Mammary epithelial cell (primary cell): ENCODE measurements at regions of chr9 and their contacts with region 1.

Region 1: DNA sequence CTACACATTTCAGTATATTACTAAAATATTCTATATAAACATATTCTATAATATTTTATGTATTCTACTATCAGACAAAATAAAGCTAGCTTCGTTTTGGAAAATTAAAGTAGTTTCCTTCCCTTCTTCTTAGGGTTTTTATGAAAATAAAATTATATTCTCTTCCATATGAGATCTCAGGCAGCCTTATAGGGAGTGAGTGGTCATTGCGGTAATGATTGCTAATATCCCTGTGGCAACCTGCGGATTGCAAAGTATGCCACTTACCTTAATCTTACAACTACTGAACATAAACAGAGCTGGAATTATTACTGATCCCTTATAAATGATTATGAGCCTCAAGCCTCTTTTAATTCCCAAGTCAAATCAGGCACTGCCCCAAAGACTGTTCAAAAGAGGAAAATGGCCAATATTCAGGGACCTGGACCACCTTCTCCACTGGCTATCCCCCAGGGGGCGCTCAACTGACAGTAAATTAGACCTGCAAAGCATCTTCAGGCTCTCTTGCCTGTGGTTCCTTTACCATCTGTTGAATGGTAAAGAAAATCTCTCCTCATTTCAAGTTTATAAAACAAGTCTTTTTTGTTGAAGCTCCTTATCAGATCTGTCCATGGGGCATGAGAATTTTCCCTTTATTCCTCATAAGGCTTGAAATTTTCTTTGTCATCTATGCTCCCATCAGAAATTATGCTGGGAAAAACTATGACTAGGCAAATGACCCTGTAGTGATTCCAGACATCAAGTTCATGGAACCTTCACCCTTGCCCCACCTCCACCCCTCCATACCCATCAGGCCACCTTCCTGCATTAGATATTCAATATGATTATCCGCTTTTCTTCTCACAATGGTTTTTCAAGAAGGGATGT is 163.9 kb downstream of the CEMIP2 start:
- DNase-seq: peak; percentile 45
- H3K4me3 ChIP-seq: no peak overlapping the region
- H3K27ac ChIP-seq: no peak overlapping the region
- H3K4me1 ChIP-seq: peaks cover 6% of the 10 kb centered on the region
- H3K27me3 ChIP-seq: no peaks in the 10 kb centered on the region
- CTCF ChIP-seq: peak; percentile 71 to 83

Region 2: DNA sequence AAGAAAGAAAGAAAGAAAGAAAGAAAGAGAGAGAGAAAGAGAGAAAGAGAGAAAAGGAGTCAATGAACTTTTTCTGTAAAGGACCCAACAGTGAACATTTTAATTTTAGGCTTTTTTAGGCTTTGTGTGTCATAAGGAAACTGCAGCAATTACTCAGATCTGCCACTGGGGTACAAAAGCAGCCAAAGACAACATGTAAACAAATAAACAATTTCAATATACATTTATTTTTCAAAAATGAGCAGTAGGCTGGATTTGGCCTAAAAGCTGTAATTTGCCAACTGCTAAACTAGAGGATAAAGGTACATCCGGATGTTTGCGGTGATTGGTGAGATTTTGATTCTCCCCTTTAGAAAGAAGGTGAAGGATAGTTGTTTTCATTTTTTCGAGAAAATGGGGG is 20.3 kb after region 1 on chr9:
- CTCF ChIA-PET with region 1: no interaction called
- dilution Hi-C with region 1: no loop called
- in situ Hi-C with region 1: no loop called
- intact Hi-C with region 1: no loop called
- DNase-seq: no peak
- H3K4me3 ChIP-seq: no peak overlapping the region
- H3K27ac ChIP-seq: no peak overlapping the region
- H3K4me1 ChIP-seq: peaks cover 10% of the 10 kb centered on the region
- H3K27me3 ChIP-seq: no peaks in the 10 kb centered on the region
- CTCF ChIP-seq: no peak

Region 3: GRCh38 chr9:71716138-71716909 is 111.9 kb after region 1 on chr9:
- CTCF ChIA-PET with region 1: no interaction called
- dilution Hi-C with region 1: no loop called
- in situ Hi-C with region 1: no loop called
- intact Hi-C with region 1: loop called (anchors 2 kb)
- DNase-seq: no peak
- H3K4me3 ChIP-seq: no peak overlapping the region
- H3K27ac ChIP-seq: no peak overlapping the region
- H3K4me1 ChIP-seq: peaks cover 19% of the 10 kb centered on the region
- H3K27me3 ChIP-seq: no peaks in the 10 kb centered on the region
- CTCF ChIP-seq: peak; percentile 39 to 40

Region 4: DNA sequence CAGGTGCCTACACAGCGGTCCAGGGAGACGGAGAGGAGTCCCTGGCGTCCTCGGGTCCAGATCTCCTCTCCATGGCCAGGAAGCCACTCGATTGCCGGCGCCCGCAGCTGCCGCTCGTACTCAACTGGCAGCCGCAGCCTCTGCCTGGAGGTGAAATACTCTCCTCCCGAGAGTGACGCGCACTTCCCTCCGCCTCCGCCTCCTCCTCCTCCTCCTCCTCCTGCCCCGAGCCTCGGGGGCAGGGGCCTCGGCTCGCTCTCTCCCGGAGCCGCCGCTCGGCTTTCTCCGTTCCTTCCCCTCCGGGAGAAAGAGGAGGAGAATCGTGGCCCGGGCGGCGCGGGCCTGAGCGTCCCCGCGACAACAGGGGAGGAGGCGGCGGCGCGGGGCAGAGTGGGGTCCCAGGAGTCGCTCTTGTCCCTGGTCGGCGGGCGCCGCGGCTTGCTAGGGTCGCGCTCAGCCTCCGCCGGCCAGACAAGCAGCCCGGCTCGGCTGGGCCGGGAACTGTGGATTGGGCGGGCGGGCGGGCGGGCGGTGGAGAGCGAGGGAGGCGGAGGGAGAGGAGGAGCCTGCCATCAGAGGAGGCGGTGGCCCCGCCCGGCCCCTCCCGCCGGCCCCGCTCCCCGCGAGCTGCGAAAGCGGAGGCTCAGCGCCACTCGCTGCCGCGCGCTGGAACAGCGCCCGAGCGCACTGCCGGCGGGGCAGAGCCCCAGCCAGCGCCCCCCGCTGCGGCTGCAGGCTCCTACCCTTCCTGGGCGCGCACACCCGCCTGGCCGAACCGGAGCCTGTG is 164.2 kb after region 1 on chr9 and contains the start of gene CEMIP2:
- CTCF ChIA-PET with region 1: no interaction called
- dilution Hi-C with region 1: no loop called
- in situ Hi-C with region 1: no loop called
- intact Hi-C with region 1: loop called (anchors 1 kb)
- DNase-seq: peak; percentile 94
- H3K4me3 ChIP-seq: peak within 1 kb of the TSS; percentile 76 to 86 (median 84)
- H3K27ac ChIP-seq: peak within 1 kb of the TSS; percentile 69
- H3K4me1 ChIP-seq: peaks cover 37% of the 10 kb centered on the region
- H3K27me3 ChIP-seq: no peaks in the 10 kb centered on the region
- CTCF ChIP-seq: peak; percentile 18 to 54
- total RNA-seq, gene CEMIP2: 76.4 to 398 TPM

Region 5: GRCh38 chr9:72022841-72023240 is 418.4 kb after region 1 on chr9:
- CTCF ChIA-PET with region 1: no interaction called
- dilution Hi-C with region 1: no loop called
- in situ Hi-C with region 1: no loop called
- intact Hi-C with region 1: loop called (anchors 5 kb)
- DNase-seq: peak; percentile 89
- H3K4me3 ChIP-seq: no peak overlapping the region
- H3K27ac ChIP-seq: no peak overlapping the region
- H3K4me1 ChIP-seq: peaks cover 20% of the 10 kb centered on the region
- H3K27me3 ChIP-seq: no peaks in the 10 kb centered on the region
- CTCF ChIP-seq: no peak